ENCODE measurements at regions of chr18 and their contacts with region 1.

Region 1: GRCh38 chr18:5879479-5879882 is 15.8 kb downstream of the TMEM200C start:
- DNase-seq: no peak
- ATAC-seq: peak in 1 of 2 donors; percentile 50

Region 2: GRCh38 chr18:6414118-6414722 is 534.7 kb after region 1 on chr18:
- intact Hi-C with region 1: loop called in 1 of 2 experiments (anchors 10 kb)
- DNase-seq: peak; percentile 79
- ATAC-seq: peak; percentile 90

Region 3: GRCh38 chr18:6482198-6482977 is 602.9 kb after region 1 on chr18:
- intact Hi-C with region 1: loop called in 1 of 2 experiments (anchors 10 kb)
- DNase-seq: peak; percentile 86
- ATAC-seq: peak; percentile 99 to 100

Measured in left cardiac atrium (tissue), 4 donors.